HepG2 (cell line): ENCODE measurements at regions of chr6 and their contacts with region 1.

Region 1: DNA sequence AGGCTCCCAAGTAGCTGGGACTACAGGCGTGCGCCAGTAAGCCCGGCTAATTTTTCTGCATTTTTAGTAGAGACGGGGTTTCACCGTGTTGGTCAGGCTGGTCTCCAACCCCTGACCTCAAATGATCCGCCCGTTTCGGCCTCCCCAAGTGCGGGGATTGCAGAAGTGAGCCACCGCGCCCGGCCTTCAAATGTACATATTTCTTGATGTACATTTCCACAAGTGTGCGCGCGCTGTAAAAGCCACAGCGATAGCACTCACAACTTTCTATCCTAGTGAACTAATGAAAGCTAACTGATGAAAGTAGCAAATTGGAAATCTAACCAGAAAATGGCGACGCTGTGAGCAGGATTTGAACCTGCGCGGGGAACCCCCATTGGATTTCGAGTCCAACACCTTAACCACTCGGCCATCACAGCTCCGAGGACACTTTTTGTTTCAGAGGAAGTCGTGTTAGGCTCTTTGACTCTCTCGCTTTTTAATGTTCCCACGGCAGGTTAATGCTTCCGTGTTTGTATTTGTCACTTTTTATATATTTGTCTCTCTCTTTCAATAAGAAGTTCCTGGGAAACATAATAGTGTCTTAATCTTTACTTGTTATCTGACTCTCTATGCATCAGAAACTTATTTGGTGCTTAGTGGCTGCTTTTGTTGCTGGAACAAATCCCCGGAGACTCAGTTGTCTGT is 199.4 kb upstream of the ZNF184 start:
- DNase-seq: peak; percentile 91
- ATAC-seq: peak; percentile 71
- H3K4me3 ChIP-seq: peak overlapping the region; percentile 64 to 69 (median 67)
- H3K27ac ChIP-seq: peak overlapping the region; percentile 35
- H3K4me1 ChIP-seq: peaks cover 28% of the 10 kb centered on the region; the same call in 1 of the 2 replicates
- H3K27me3 ChIP-seq: no peaks in the 10 kb centered on the region; a peak in 1 of 5 replicates
- CTCF ChIP-seq: no peak
- EP300 ChIP-seq: no peak; a peak in 1 of 4 replicates
- POLR2A ChIP-seq: no peak
- RAD21 ChIP-seq: no peak

Region 2: GRCh38 chr6:26322645-26323482 is 1349.4 kb before region 1 on chr6:
- CTCF ChIA-PET with region 1: no interaction called
- POLR2A ChIA-PET with region 1: no interaction called
- in situ Hi-C with region 1: no loop called
- intact Hi-C with region 1: loop called (anchors 5 kb)
- DNase-seq: peak; percentile 93
- ATAC-seq: peak; percentile 64
- H3K4me3 ChIP-seq: peak overlapping the region; percentile 61 to 89 (median 78)
- H3K27ac ChIP-seq: peak overlapping the region; percentile 76
- H3K4me1 ChIP-seq: peaks cover 65% of the 10 kb centered on the region
- H3K27me3 ChIP-seq: no peaks in the 10 kb centered on the region; a peak in 1 of 5 replicates
- CTCF ChIP-seq: no peak
- EP300 ChIP-seq: no peak
- POLR2A ChIP-seq: no peak
- RAD21 ChIP-seq: no peak

Region 3: DNA sequence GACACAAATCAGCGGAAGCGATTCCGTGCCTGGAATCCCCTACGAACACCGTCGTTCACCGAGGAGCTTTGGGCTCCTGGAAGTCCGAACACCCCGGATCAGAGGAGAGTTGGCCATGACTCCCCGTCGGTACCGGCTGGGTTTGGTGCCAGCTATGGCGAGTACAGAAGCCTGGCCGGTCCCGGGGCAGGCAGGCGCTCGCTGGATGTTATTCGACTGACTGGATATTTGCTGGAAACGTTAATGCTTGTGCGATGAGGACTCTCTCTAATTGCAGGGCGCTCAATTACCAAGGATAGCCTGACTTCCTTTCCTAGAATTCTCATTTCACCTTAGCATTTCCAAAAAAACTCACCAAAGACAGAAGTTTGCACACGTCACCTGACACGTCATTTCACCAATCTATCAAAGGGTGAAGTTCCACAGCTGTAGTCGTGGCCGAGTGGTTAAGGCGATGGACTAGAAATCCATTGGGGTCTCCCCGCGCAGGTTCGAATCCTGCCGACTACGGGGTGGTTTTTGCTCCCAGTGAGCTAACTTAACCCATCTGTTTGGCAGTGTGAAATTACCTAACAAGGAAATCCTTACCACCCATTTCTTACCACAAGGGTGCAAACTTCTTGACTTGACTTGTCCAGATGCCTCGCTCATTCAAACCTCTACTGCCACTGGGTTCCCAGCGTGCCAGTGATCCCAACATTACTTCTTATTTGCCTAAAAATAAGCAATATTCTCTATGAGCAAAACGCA is 176.7 kb before region 1 on chr6:
- CTCF ChIA-PET with region 1: no interaction called
- POLR2A ChIA-PET with region 1: no interaction called
- in situ Hi-C with region 1: no loop called
- intact Hi-C with region 1: loop called (anchors 5 kb)
- DNase-seq: peak; percentile 80
- ATAC-seq: peak; percentile 85
- H3K4me3 ChIP-seq: peak overlapping the region; percentile 69 to 87 (median 86)
- H3K27ac ChIP-seq: no peak overlapping the region
- H3K4me1 ChIP-seq: peaks cover 28% of the 10 kb centered on the region
- H3K27me3 ChIP-seq: peaks cover 0 to 9% of the 10 kb centered on the region in 2 experiments; a peak in 1 of 5 replicates
- CTCF ChIP-seq: peak; percentile 31
- EP300 ChIP-seq: 0 out of 4 replicates have a peak, but pooled peaks of 1 of the 2 experiments have one; percentile 34
- POLR2A ChIP-seq: no peak
- RAD21 ChIP-seq: no peak

Region 4: DNA sequence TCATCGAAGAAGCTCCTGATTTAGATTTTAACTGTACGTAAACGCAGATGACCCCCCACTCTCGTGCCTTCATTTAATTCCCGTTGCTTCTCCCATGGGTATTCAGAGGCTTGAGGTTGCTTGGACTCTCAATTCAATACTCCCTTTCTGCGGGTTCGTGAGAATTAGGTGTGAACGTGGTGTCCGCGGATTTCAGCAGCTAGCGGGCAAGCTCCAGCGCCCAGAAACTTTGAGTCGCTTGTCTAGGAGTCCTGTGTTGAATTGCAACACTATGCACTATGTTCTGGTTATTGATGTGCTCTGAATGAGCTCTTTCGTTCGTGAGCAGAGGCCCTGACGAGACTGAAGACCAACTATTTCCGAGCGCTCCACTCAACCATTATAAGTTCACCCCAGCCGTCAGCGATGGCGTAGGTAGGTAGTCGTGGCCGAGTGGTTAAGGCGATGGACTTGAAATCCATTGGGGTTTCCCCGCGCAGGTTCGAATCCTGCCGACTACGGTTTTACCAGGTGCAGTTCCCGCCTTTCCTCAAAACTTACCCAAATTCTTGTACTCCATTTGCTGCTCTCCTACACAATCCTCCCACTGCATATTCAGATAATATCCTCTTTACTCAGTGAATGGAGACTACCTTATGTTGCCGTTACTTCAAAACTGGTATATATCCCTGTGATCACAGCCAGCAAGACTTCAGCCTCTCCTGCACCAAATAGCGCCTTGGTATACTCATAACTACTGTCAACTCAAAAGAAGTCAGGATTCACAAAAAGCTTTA is 126.8 kb before region 1 on chr6:
- CTCF ChIA-PET with region 1: no interaction called
- POLR2A ChIA-PET with region 1: no interaction called
- in situ Hi-C with region 1: no loop called
- intact Hi-C with region 1: loop called (anchors 5 kb)
- DNase-seq: peak; percentile 90
- ATAC-seq: peak; percentile 80
- H3K4me3 ChIP-seq: peak overlapping the region; percentile 68 to 80 (median 78)
- H3K27ac ChIP-seq: peak overlapping the region; percentile 55
- H3K4me1 ChIP-seq: peaks cover 29% of the 10 kb centered on the region
- H3K27me3 ChIP-seq: no peaks in the 10 kb centered on the region; a peak in 1 of 5 replicates
- CTCF ChIP-seq: no peak
- EP300 ChIP-seq: no peak
- POLR2A ChIP-seq: no peak
- RAD21 ChIP-seq: no peak

Region 5: DNA sequence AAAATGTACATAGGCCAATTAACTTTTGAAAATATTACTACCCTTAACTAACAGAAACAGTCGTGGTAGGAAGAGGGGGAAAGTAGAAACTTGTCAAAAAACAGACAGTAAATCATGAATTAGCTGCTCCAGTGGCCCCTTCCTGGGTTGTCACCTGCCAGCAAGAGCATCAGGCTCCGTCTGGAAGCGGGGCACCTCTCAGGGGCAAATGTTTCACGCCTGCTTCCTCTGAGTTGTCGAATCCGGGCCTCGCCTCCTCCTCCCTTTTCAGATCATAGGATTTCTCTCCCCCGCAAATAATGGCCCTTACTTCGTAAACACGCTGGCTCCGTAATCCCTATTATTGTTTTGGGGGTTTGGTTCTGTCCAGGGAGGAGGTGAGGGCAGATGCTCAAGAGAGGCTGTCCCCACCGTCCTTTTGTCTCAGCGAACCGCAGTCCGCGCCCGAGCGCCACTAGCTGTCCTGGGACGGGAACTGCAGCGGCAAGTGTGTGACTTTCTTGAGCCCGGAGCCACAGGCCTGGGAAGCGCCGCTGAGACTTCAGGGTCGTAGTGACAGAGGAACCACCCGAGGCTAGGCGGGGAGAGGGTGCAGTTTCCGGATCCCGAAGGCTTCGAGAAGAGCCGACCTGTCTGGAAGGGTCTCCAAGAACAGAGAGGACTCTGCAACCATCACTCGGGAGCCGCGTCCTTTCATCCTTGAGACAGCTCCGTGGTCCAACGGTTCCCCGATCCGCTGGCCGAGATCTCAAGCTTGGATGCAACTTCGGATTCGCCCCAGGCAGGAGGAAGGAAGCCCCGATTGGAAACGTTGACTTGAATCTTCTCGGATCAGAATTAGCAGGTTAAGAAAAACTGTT is 15.1 kb after region 1 on chr6:
- CTCF ChIA-PET with region 1: no interaction called
- POLR2A ChIA-PET with region 1: interaction called, 6 read pairs
- in situ Hi-C with region 1: no loop called
- intact Hi-C with region 1: loop called (anchors 1 kb)
- DNase-seq: peak; percentile 79
- ATAC-seq: peak; percentile 85
- H3K4me3 ChIP-seq: peak overlapping the region; percentile 65 to 93 (median 78)
- H3K27ac ChIP-seq: peak overlapping the region; percentile 15
- H3K4me1 ChIP-seq: peaks cover 56% of the 10 kb centered on the region
- H3K27me3 ChIP-seq: no peaks in the 10 kb centered on the region; a peak in 1 of 5 replicates
- CTCF ChIP-seq: peak; percentile 95
- EP300 ChIP-seq: no peak
- POLR2A ChIP-seq: no peak
- RAD21 ChIP-seq: peak; percentile 70

Region 6: GRCh38 chr6:27902335-27903314 is 230.4 kb after region 1 on chr6:
- CTCF ChIA-PET with region 1: no interaction called
- POLR2A ChIA-PET with region 1: no interaction called
- in situ Hi-C with region 1: no loop called
- intact Hi-C with region 1: loop called (anchors 5 kb)
- DNase-seq: peak; percentile 85
- ATAC-seq: peak; percentile 95
- H3K4me3 ChIP-seq: peak overlapping the region; percentile 60 to 79 (median 69)
- H3K27ac ChIP-seq: peak overlapping the region; percentile 57
- H3K4me1 ChIP-seq: peaks cover 25% of the 10 kb centered on the region
- H3K27me3 ChIP-seq: no peaks in the 10 kb centered on the region
- CTCF ChIP-seq: no peak
- EP300 ChIP-seq: no peak
- POLR2A ChIP-seq: no peak
- RAD21 ChIP-seq: peak; percentile 49; the same call in 1 of the 2 replicates

Region 7: DNA sequence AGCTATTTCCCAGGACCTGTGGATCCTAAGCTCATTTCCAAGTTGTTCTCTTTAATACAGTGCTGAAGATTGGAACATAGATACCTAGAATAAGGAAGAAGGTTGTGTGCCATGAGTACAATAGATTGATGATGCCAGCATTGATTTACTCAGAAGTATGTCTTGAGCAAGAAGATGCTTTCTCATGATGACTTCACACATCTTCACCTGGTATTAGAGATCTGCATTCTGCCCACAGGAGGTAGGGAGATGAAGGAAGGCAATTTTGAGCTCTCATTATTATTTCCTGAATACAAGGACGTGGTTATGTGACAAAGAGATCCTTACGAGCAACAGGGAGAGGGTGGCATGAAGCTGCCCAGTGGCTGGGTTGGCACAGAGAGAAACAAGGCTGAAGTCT is 388.1 kb after region 1 on chr6:
- CTCF ChIA-PET with region 1: no interaction called
- POLR2A ChIA-PET with region 1: no interaction called
- in situ Hi-C with region 1: no loop called
- intact Hi-C with region 1: no loop called
- DNase-seq: no peak
- ATAC-seq: no peak
- H3K4me3 ChIP-seq: no peak overlapping the region
- H3K27ac ChIP-seq: no peak overlapping the region
- H3K4me1 ChIP-seq: no peaks in the 10 kb centered on the region
- H3K27me3 ChIP-seq: no peaks in the 10 kb centered on the region
- CTCF ChIP-seq: no peak
- EP300 ChIP-seq: no peak
- POLR2A ChIP-seq: no peak
- RAD21 ChIP-seq: no peak